B cell (primary cell): ENCODE measurements at regions of chr14 and their contacts with region 1.

Region 1: DNA sequence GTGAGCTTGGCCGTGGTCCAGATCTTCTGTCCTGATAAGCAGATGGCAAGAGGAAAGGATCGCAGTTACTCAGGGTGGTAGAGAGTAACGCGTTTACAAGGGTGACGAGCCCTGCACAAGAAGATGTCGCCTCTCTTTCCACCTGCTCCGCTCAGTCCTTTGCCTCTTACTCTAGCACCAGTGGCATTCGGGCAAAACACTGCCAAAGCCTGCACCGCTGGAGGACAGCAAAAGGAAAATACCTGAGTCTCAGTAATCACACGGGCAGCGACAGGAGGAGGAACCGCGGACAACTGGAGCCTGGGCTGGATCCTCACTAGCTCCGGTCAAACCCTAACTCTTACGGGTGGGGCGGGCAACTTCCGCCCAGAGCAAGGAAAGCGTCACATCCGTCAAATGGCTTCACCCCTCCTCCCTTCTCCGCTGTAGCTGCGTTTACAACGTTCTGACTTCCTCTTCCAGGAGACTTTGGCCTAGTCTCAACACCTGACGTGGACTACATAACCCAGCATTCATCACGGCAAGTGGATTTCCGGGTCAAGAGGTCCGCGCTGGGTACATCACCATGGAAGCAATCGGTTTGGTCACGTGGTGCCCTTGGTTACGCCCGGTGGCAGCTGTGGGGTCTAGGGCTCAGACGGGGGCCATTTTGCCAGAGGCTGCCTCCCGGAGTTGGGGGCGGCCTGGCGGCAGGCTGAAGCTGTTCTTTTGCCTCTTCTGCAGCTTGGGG is at the starts of genes KLHL28 and TOGARAM1:
- DNase-seq: peak; percentile 99
- ATAC-seq: peak; percentile 90
- H3K4me3 ChIP-seq: peak within 1 kb of the TSS; percentile 81 to 96 (median 92)
- H3K4me3 Mint-ChIP-seq: no peak within 1 kb of the TSS
- H3K27ac ChIP-seq: peak within 1 kb of the TSS; percentile 84 to 93
- H3K27ac Mint-ChIP-seq: no peak within 1 kb of the TSS
- H3K4me1 ChIP-seq: peaks cover 37 to 47% of the 10 kb centered on the region in 2 donors
- H3K4me1 Mint-ChIP-seq: peaks cover 45% of the 10 kb centered on the region
- H3K27me3 ChIP-seq: no peaks in the 10 kb centered on the region
- H3K27me3 Mint-ChIP-seq: no peaks in the 10 kb centered on the region
- CTCF ChIP-seq: no peak
- total RNA-seq, gene KLHL28: 33.5 and 36.1 TPM in 2 replicates
- total RNA-seq, gene TOGARAM1: 23.9 and 25.6 TPM in 2 replicates

Region 2: GRCh38 chr14:44657696-44658388 is 303.9 kb before region 1 on chr14:
- CTCF ChIA-PET with region 1: no interaction called
- POLR2A ChIA-PET with region 1: no interaction called
- intact Hi-C with region 1: no loop called
- DNase-seq: no peak
- ATAC-seq: no peak
- H3K4me3 ChIP-seq: no peak overlapping the region
- H3K4me3 Mint-ChIP-seq: no peak overlapping the region
- H3K27ac ChIP-seq: no peak overlapping the region
- H3K27ac Mint-ChIP-seq: no peak overlapping the region
- H3K4me1 ChIP-seq: no peaks in the 10 kb centered on the region
- H3K4me1 Mint-ChIP-seq: peaks cover 3% of the 10 kb centered on the region
- H3K27me3 ChIP-seq: no peaks in the 10 kb centered on the region
- H3K27me3 Mint-ChIP-seq: no peaks in the 10 kb centered on the region
- CTCF ChIP-seq: no peak

Region 3: GRCh38 chr14:44880791-44881190 is 81.0 kb before region 1 on chr14:
- CTCF ChIA-PET with region 1: no interaction called
- POLR2A ChIA-PET with region 1: no interaction called
- intact Hi-C with region 1: no loop called
- DNase-seq: no peak
- ATAC-seq: no peak
- H3K4me3 ChIP-seq: no peak overlapping the region
- H3K4me3 Mint-ChIP-seq: no peak overlapping the region
- H3K27ac ChIP-seq: no peak overlapping the region
- H3K27ac Mint-ChIP-seq: no peak overlapping the region
- H3K4me1 ChIP-seq: no peaks in the 10 kb centered on the region
- H3K4me1 Mint-ChIP-seq: no peaks in the 10 kb centered on the region
- H3K27me3 ChIP-seq: peaks cover 0 to 7% (median 0%) of the 10 kb centered on the region in 4 experiments
- H3K27me3 Mint-ChIP-seq: peaks cover 26% of the 10 kb centered on the region
- CTCF ChIP-seq: no peak

Region 4: DNA sequence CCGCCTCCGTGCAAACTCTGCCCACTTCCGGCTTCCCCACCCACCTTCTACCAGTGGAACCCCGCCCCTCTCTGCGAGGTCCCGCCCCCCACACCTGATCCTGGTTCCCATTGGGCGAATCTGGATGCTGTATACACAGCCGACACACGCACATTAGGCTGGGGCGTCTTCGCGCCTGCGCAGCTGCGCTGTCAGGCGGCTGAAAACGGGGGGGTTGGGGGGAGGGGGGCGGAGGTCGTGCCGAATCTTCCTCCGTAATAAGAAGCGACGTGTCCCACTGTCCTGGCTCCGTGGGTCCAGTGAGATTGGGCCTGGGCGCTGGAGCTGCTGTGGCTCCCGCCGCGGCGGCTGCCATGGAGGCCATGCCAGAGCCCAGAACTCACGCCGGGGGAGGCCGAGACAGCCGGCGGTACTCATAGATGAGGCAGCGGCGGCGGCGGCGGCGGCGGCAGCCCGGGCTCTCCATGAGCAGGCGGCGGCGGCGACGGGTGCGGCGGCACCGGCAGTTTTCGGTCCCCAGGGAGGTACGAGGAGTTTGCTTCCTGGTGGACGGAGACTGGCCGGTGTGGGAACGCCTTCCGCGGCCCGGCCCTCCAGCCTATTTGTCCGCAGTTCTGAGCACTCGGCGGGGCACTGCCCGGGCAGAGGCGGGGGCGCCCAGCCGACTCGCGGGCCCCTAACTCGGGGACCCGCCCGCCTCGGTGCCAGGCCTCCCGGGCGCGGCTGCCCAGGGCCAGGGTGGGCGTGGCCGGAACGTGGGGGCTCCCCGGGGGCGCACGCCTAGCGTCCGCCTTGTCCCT is 64.5 kb before region 1 on chr14:
- CTCF ChIA-PET with region 1: interaction called, 5 read pairs
- POLR2A ChIA-PET with region 1: interaction called, 18 read pairs
- intact Hi-C with region 1: loop called (anchors 1 kb)
- DNase-seq: peak; percentile 97
- ATAC-seq: peak; percentile 96
- H3K4me3 ChIP-seq: peak overlapping the region; percentile 45 to 87 (median 80)
- H3K4me3 Mint-ChIP-seq: peak overlapping the region; percentile 96
- H3K27ac ChIP-seq: peak overlapping the region; percentile 87 to 96
- H3K27ac Mint-ChIP-seq: peak overlapping the region; percentile 98
- H3K4me1 ChIP-seq: peaks cover 10 to 11% of the 10 kb centered on the region in 2 donors
- H3K4me1 Mint-ChIP-seq: peaks cover 14% of the 10 kb centered on the region
- H3K27me3 ChIP-seq: no peaks in the 10 kb centered on the region
- H3K27me3 Mint-ChIP-seq: no peaks in the 10 kb centered on the region
- CTCF ChIP-seq: no peak

Region 5: GRCh38 chr14:44945264-44945663 is 16.5 kb before region 1 on chr14:
- CTCF ChIA-PET with region 1: no interaction called
- POLR2A ChIA-PET with region 1: no interaction called
- intact Hi-C with region 1: no loop called
- DNase-seq: no peak
- ATAC-seq: no peak
- H3K4me3 ChIP-seq: no peak overlapping the region
- H3K4me3 Mint-ChIP-seq: no peak overlapping the region
- H3K27ac ChIP-seq: no peak overlapping the region
- H3K27ac Mint-ChIP-seq: no peak overlapping the region
- H3K4me1 ChIP-seq: no peaks in the 10 kb centered on the region
- H3K4me1 Mint-ChIP-seq: peaks cover 4% of the 10 kb centered on the region
- H3K27me3 ChIP-seq: no peaks in the 10 kb centered on the region
- H3K27me3 Mint-ChIP-seq: no peaks in the 10 kb centered on the region
- CTCF ChIP-seq: no peak

Region 6: DNA sequence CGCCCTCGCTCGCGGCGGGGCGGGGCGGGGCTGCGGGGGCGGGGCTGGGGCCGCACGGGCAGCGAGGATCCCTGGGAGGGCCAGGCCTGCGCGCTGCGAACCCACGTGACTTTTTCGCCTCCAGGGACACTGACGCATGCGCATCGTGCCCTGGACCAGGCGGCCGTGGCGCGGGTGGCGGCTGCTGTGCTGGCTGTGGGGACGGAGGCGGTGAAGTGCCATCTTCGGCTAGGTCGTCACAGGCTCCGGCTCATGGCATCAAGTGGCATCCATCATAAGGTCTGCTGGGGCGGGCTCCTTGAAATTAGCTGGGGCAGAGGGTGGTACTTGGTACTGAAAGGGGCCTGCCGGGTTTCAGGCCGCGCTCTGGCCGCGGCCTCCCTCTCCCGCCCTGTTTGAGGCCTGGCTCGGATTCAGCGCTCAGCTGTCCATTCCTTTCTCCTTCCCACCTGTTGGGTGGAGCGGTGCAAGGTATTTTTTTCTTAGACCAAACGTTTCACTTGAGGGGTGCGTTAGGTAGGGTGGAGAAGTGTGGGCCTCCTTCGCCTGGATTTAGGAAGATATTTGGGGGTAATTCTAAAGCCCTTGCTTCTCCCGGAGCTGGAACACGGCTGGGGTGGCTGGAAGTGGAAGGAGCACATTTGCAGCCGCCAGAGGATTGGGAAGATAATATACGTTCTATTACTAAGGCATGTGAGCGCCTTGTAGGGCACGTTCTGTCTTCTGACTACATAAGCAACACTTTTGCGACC is 122.4 kb after region 1 on chr14 and contains the start of gene PRPF39:
- CTCF ChIA-PET with region 1: no interaction called
- POLR2A ChIA-PET with region 1: interaction called, 13 read pairs
- intact Hi-C with region 1: loop called (anchors 1 kb)
- DNase-seq: peak; percentile 97
- ATAC-seq: peak; percentile 93
- H3K4me3 ChIP-seq: peak within 1 kb of the TSS; percentile 64 to 95 (median 91)
- H3K4me3 Mint-ChIP-seq: peak within 1 kb of the TSS; percentile 96
- H3K27ac ChIP-seq: peak within 1 kb of the TSS; percentile 74 to 96
- H3K27ac Mint-ChIP-seq: peak within 1 kb of the TSS; percentile 96
- H3K4me1 ChIP-seq: peaks cover 21 to 36% of the 10 kb centered on the region in 2 donors
- H3K4me1 Mint-ChIP-seq: peaks cover 49% of the 10 kb centered on the region
- H3K27me3 ChIP-seq: no peaks in the 10 kb centered on the region
- H3K27me3 Mint-ChIP-seq: no peaks in the 10 kb centered on the region
- CTCF ChIP-seq: no peak
- total RNA-seq, gene PRPF39: 67.5 and 72.7 TPM in 2 replicates

Region 7: GRCh38 chr14:45103806-45104205 is 142.0 kb after region 1 on chr14:
- CTCF ChIA-PET with region 1: no interaction called
- POLR2A ChIA-PET with region 1: no interaction called
- intact Hi-C with region 1: no loop called
- DNase-seq: no peak
- ATAC-seq: no peak
- H3K4me3 ChIP-seq: no peak overlapping the region
- H3K4me3 Mint-ChIP-seq: no peak overlapping the region
- H3K27ac ChIP-seq: no peak overlapping the region
- H3K27ac Mint-ChIP-seq: no peak overlapping the region
- H3K4me1 ChIP-seq: no peaks in the 10 kb centered on the region
- H3K4me1 Mint-ChIP-seq: no peaks in the 10 kb centered on the region
- H3K27me3 ChIP-seq: no peaks in the 10 kb centered on the region
- H3K27me3 Mint-ChIP-seq: no peaks in the 10 kb centered on the region
- CTCF ChIP-seq: no peak